Breast epithelium (tissue), 4 donors: ENCODE measurements at regions of chr12 and their contacts with region 1.

Region 1: GRCh38 chr12:62873116-62873742 is 61.7 kb downstream of the PPM1H start:
- DNase-seq: no peak
- H3K4me3 ChIP-seq: no peak overlapping the region
- H3K27ac ChIP-seq: no peak overlapping the region
- H3K4me1 ChIP-seq: no peaks in the 10 kb centered on the region
- H3K27me3 ChIP-seq: no peaks in the 10 kb centered on the region
- CTCF ChIP-seq: no peak
- POLR2A ChIP-seq: no peak

Region 2: DNA sequence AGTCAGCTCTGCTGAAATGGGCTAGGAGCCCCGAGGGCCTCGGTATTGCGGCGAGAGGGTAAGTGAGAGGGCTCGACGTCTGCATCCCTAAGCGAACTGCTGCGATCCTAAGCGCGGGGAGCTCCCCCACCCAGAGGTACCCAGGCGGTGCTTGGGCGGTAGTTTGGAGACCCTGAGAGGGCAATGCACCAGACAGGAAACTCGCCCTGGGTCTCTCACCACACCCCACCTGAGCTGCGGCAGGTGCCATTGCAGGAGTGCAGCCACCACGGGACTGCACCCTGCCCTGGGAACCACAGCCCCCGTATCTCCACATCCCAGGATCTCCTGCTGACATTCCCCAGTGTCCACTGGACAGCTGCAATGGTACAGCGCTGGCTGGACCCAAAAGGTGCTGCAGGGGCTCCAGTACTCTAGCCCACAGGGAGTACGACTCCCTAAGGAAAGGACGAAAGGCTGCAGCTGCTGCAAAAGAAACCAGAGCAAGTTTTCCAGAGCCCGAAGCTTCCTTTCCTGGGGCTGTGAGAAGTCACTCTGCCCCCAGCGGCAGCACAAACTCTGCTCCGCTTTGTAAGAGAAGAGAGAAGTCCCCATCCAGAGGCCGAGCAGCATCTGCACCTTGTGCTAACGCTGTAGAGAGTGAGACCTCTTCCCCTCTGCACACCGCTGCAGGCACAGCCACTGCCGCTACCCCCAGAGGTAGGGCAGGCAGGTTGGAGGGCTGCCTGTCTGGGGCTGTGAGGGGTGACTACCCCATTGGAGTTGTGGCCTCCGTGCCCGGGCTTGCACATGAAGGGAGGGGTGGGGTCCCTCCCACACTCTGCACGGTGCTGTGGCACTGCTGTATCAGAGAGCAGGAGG is 437.7 kb before region 1 on chr12:
- intact Hi-C with region 1: no loop called
- DNase-seq: no peak
- H3K4me3 ChIP-seq: peak overlapping the region; percentile 40 to 66 (median 53)
- H3K27ac ChIP-seq: no peak overlapping the region
- H3K4me1 ChIP-seq: no peaks in the 10 kb centered on the region
- H3K27me3 ChIP-seq: no peaks in the 10 kb centered on the region
- CTCF ChIP-seq: peak in 1 of 3 donors; percentile 17
- POLR2A ChIP-seq: no peak

Region 3: GRCh38 chr12:63006536-63006935 is 133.3 kb after region 1 on chr12:
- intact Hi-C with region 1: loop called (anchors 5 kb)
- DNase-seq: no peak
- H3K4me3 ChIP-seq: no peak overlapping the region
- H3K27ac ChIP-seq: no peak overlapping the region
- H3K4me1 ChIP-seq: no peaks in the 10 kb centered on the region
- H3K27me3 ChIP-seq: no peaks in the 10 kb centered on the region
- CTCF ChIP-seq: no peak
- POLR2A ChIP-seq: no peak

Region 4: GRCh38 chr12:63170321-63170720 is 297.1 kb after region 1 on chr12:
- intact Hi-C with region 1: no loop called
- DNase-seq: no peak
- H3K4me3 ChIP-seq: no peak overlapping the region
- H3K27ac ChIP-seq: no peak overlapping the region
- H3K4me1 ChIP-seq: no peaks in the 10 kb centered on the region
- H3K27me3 ChIP-seq: no peaks in the 10 kb centered on the region
- CTCF ChIP-seq: no peak
- POLR2A ChIP-seq: no peak